ENCODE measurements at regions of chr3 and their contacts with region 1.

Region 1: GRCh38 chr3:5162102-5162501 is 25.4 kb upstream of the EDEM1 start:
- DNase-seq: no peak
- ATAC-seq: peak; percentile 71; the same call in 1 of the 2 replicates
- H3K4me3 ChIP-seq: no peak overlapping the region
- H3K27ac ChIP-seq: no peak overlapping the region
- H3K4me1 ChIP-seq: peaks cover 25% of the 10 kb centered on the region
- H3K27me3 ChIP-seq: no peaks in the 10 kb centered on the region
- CTCF ChIP-seq: no peak

Region 2: GRCh38 chr3:5136211-5136918 is 25.7 kb before region 1 on chr3:
- CTCF ChIA-PET with region 1: interaction called, 12 read pairs
- POLR2A ChIA-PET with region 1: no interaction called
- in situ Hi-C with region 1: no loop called
- intact Hi-C with region 1: no loop called
- DNase-seq: no peak
- ATAC-seq: no peak; the same call in 1 of the 2 replicates
- H3K4me3 ChIP-seq: no peak overlapping the region
- H3K27ac ChIP-seq: no peak overlapping the region
- H3K4me1 ChIP-seq: peaks cover 21% of the 10 kb centered on the region
- H3K27me3 ChIP-seq: no peaks in the 10 kb centered on the region
- CTCF ChIP-seq: peak; percentile 63

Region 3: DNA sequence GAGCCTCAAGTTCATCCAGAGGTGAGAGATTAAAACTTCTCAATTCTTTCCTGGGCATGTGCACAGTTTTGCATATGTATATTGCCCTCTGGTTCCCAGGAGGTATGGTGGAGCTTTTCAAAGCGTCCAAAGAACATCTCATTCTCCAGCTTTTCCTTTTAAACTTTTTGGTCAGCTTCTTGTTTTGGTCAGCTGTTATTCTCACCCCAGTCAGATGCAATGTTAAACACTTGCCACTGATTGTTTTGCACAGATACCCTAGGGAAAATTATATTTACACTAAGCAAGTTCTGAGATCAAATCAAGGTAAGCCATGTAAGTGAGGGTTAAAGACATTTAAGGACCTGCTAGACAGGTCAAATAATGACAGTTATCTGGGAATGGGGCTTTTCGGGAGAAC is 286.7 kb after region 1 on chr3:
- CTCF ChIA-PET with region 1: no interaction called
- POLR2A ChIA-PET with region 1: no interaction called
- in situ Hi-C with region 1: no loop called
- intact Hi-C with region 1: no loop called
- DNase-seq: no peak
- ATAC-seq: no peak
- H3K4me3 ChIP-seq: no peak overlapping the region
- H3K27ac ChIP-seq: no peak overlapping the region
- H3K4me1 ChIP-seq: no peaks in the 10 kb centered on the region
- H3K27me3 ChIP-seq: no peaks in the 10 kb centered on the region
- CTCF ChIP-seq: no peak